ENCODE measurements at regions of chr11 and their contacts with region 1.

Region 1: GRCh38 chr11:74449369-74449931 is 17.9 kb downstream of the KCNE3 start:
- DNase-seq: peak; percentile 47
- ATAC-seq: peak; percentile 94
- H3K4me3 Mint-ChIP-seq: no peak overlapping the region
- H3K27ac Mint-ChIP-seq: no peak overlapping the region
- H3K4me1 Mint-ChIP-seq: peaks cover 4% of the 10 kb centered on the region
- H3K27me3 Mint-ChIP-seq: peaks cover 6% of the 10 kb centered on the region

Region 2: GRCh38 chr11:73965076-73965860 is 484.2 kb before region 1 on chr11:
- CTCF ChIA-PET with region 1: no interaction called
- POLR2A ChIA-PET with region 1: no interaction called
- intact Hi-C with region 1: loop called in 1 of 2 experiments (anchors 5 kb)
- DNase-seq: no peak
- ATAC-seq: no peak
- H3K4me3 Mint-ChIP-seq: no peak overlapping the region
- H3K27ac Mint-ChIP-seq: no peak overlapping the region
- H3K4me1 Mint-ChIP-seq: peaks cover 44% of the 10 kb centered on the region
- H3K27me3 Mint-ChIP-seq: no peaks in the 10 kb centered on the region

Region 3: GRCh38 chr11:74321487-74322188 is 127.8 kb before region 1 on chr11:
- CTCF ChIA-PET with region 1: interaction called, 11 read pairs
- POLR2A ChIA-PET with region 1: no interaction called
- intact Hi-C with region 1: no loop called
- DNase-seq: peak; percentile 54
- ATAC-seq: peak; percentile 33
- H3K4me3 Mint-ChIP-seq: no peak overlapping the region
- H3K27ac Mint-ChIP-seq: no peak overlapping the region
- H3K4me1 Mint-ChIP-seq: no peaks in the 10 kb centered on the region
- H3K27me3 Mint-ChIP-seq: no peaks in the 10 kb centered on the region

Region 4: GRCh38 chr11:74380746-74381430 is 68.6 kb before region 1 on chr11:
- CTCF ChIA-PET with region 1: interaction called, 20 read pairs
- POLR2A ChIA-PET with region 1: no interaction called
- intact Hi-C with region 1: no loop called
- DNase-seq: no peak
- ATAC-seq: no peak
- H3K4me3 Mint-ChIP-seq: no peak overlapping the region
- H3K27ac Mint-ChIP-seq: no peak overlapping the region
- H3K4me1 Mint-ChIP-seq: peaks cover 15% of the 10 kb centered on the region
- H3K27me3 Mint-ChIP-seq: no peaks in the 10 kb centered on the region

Region 5: DNA sequence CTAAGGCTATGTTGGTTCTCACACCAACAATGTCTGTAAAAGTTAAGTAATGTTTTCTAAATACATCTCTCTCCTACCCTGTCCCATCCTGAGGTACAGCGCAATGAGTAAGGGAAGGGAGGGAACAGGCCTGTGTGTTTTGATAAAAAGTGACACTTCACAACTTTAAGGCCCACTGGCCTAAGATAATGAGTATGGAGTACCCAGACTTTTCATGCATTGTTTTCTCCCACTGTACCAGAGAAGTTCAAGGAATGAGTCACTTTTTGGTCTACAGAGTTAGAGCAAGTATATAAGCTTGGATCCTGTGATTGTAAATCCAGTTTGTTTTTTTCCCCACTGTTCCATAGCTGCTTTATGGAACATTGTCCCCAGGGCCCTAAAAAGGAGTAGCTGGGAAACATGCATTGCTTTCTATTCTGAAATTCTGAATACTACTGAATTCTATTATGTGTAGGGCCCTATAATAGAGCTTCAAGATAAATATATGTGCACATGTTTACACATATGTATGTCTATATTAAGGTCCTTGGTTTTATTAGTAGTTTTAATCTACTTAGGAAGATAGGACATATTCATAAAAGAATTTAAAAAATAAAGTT is 11.9 kb before region 1 on chr11:
- CTCF ChIA-PET with region 1: interaction called, 27 read pairs
- POLR2A ChIA-PET with region 1: no interaction called
- intact Hi-C with region 1: no loop called
- DNase-seq: no peak
- ATAC-seq: no peak
- H3K4me3 Mint-ChIP-seq: no peak overlapping the region
- H3K27ac Mint-ChIP-seq: no peak overlapping the region
- H3K4me1 Mint-ChIP-seq: peaks cover 4% of the 10 kb centered on the region
- H3K27me3 Mint-ChIP-seq: no peaks in the 10 kb centered on the region

Region 6: GRCh38 chr11:74570266-74571061 is 121.0 kb after region 1 on chr11:
- CTCF ChIA-PET with region 1: interaction called, 89 read pairs
- POLR2A ChIA-PET with region 1: no interaction called
- intact Hi-C with region 1: loop called (anchors 1 kb)
- DNase-seq: peak; percentile 51
- ATAC-seq: peak; percentile 55
- H3K4me3 Mint-ChIP-seq: no peak overlapping the region
- H3K27ac Mint-ChIP-seq: no peak overlapping the region
- H3K4me1 Mint-ChIP-seq: no peaks in the 10 kb centered on the region
- H3K27me3 Mint-ChIP-seq: no peaks in the 10 kb centered on the region

Region 7: GRCh38 chr11:74870485-74870884 is 421.0 kb after region 1 on chr11:
- CTCF ChIA-PET with region 1: no interaction called
- POLR2A ChIA-PET with region 1: no interaction called
- intact Hi-C with region 1: loop called in 1 of 2 experiments (anchors 5 kb)
- DNase-seq: no peak
- ATAC-seq: peak; percentile 44
- H3K4me3 Mint-ChIP-seq: no peak overlapping the region
- H3K27ac Mint-ChIP-seq: no peak overlapping the region
- H3K4me1 Mint-ChIP-seq: no peaks in the 10 kb centered on the region
- H3K27me3 Mint-ChIP-seq: no peaks in the 10 kb centered on the region

Measured in activated CD4-positive, alpha-beta T cell treated with anti-CD3 and anti-CD28 coated beads for 36 hours (primary cell).